WTC11 (cell line): ENCODE measurements at regions of chr1 and their contacts with region 1.

Region 1: GRCh38 chr1:201254625-201255506 is 28.4 kb upstream of the PKP1 start:
- DNase-seq: peak; percentile 96
- ATAC-seq: peak; percentile 81
- H3K4me3 Mint-ChIP-seq: no peak overlapping the region
- H3K27ac Mint-ChIP-seq: no peak overlapping the region
- H3K4me1 Mint-ChIP-seq: peaks cover 5% of the 10 kb centered on the region; the same call in 1 of the 2 replicates
- H3K27me3 Mint-ChIP-seq: no peaks in the 10 kb centered on the region; the same call in 1 of the 2 replicates
- CTCF ChIP-seq: peak; percentile 99

Region 2: DNA sequence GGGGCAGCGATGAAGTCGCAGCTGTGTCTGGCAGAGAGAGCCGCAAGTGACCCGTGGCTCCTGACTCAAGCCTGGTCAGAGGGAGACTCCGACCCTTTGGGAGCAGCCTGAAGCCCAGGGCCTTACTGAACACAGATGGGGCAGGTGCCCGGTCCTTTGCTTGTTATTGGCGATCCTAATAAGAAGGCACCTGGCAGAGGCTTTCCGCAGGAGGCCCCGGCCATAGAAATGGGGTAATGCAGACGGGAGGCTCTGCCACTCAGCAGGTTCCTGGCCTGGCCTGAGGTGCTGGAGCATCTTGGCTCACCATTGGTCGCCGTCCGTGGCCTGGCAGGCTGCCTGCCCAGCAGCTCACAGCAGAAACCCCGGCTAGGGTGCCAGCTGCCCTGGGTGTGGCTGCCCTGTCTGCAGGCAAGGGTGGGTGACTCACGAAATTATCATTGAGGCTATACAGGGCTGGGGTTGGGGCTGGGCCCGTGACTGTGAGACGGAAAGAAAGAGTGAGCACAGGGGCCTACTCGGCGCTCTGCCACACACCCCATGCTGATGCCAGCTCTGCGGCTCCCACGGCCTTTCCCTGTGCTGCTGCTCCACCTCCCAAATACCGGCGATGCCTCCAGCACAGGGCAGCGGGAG is 20.3 kb after region 1 on chr1:
- CTCF ChIA-PET with region 1: interaction called, 10 read pairs
- POLR2A ChIA-PET with region 1: no interaction called
- DNase-seq: no peak
- ATAC-seq: peak; percentile 32
- H3K4me3 Mint-ChIP-seq: no peak overlapping the region
- H3K27ac Mint-ChIP-seq: no peak overlapping the region
- H3K4me1 Mint-ChIP-seq: peaks cover 4% of the 10 kb centered on the region; the same call in 1 of the 2 replicates
- H3K27me3 Mint-ChIP-seq: no peaks in the 10 kb centered on the region; the same call in 1 of the 2 replicates
- CTCF ChIP-seq: no peak

Region 3: GRCh38 chr1:201288766-201289165 is 33.9 kb after region 1 on chr1:
- CTCF ChIA-PET with region 1: interaction called, 16 read pairs
- POLR2A ChIA-PET with region 1: no interaction called
- DNase-seq: no peak
- ATAC-seq: no peak
- H3K4me3 Mint-ChIP-seq: no peak overlapping the region
- H3K27ac Mint-ChIP-seq: 0 out of 2 replicates have a peak overlapping the region, but pooled peaks have one; percentile 15
- H3K4me1 Mint-ChIP-seq: peaks cover 24% of the 10 kb centered on the region
- H3K27me3 Mint-ChIP-seq: peaks cover 15% of the 10 kb centered on the region
- CTCF ChIP-seq: no peak

Region 4: GRCh38 chr1:201348211-201348566 is 93.3 kb after region 1 on chr1:
- CTCF ChIA-PET with region 1: interaction called, 59 read pairs
- POLR2A ChIA-PET with region 1: no interaction called
- DNase-seq: peak; percentile 81
- ATAC-seq: peak; percentile 87
- H3K4me3 Mint-ChIP-seq: no peak overlapping the region; the same call in 1 of the 2 replicates
- H3K27ac Mint-ChIP-seq: 0 out of 2 replicates have a peak overlapping the region, but pooled peaks have one; percentile 10
- H3K4me1 Mint-ChIP-seq: peaks cover 40% of the 10 kb centered on the region
- H3K27me3 Mint-ChIP-seq: no peaks in the 10 kb centered on the region; the same call in 1 of the 2 replicates
- CTCF ChIP-seq: peak; percentile 74